ENCODE measurements at regions of chr12 and their contacts with region 1.

Region 1: DNA sequence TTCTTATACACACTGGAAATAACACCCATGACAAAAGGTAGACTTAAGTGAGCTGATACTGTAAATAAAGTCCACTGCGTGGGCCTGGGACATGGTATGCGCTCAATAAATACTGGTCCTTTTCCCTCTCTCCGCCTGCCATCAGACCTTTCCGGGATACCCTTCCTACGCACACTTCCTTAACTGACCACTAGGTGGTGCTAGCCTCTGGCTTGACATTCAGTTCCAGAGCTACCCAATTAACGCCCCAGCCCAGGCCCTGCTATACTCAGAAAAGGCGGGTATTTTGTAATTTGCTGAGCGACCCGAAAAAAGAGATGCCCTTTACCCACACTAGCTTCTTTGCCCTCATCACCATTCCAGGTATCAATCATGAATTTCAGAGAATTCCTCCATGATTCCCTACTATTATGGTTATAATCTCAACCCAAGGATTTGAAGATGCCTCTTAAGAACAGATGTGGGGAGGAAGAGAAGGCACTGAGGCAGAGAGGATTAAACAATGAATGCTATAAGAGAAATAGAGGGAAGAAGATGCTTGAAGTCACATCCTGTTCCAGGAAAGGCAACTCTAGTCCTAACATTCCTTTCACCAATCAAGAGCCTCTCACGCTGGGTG is 3.9 kb upstream of the LRP1 start:
- DNase-seq: peak; percentile 88
- H3K4me3 ChIP-seq: no peak overlapping the region
- H3K27ac ChIP-seq: no peak overlapping the region
- H3K4me1 ChIP-seq: peaks cover 0 to 10% (median 9%) of the 10 kb centered on the region in 4 donors
- H3K27me3 ChIP-seq: no peaks in the 10 kb centered on the region
- CTCF ChIP-seq: peak; percentile 92 to 96 (median 96)
- EP300 ChIP-seq: no peak
- POLR2A ChIP-seq: no peak

Region 2: GRCh38 chr12:57175428-57176138 is 51.2 kb after region 1 on chr12:
- intact Hi-C with region 1: loop called (anchors 2 kb)
- DNase-seq: peak; percentile 95
- H3K4me3 ChIP-seq: no peak overlapping the region
- H3K27ac ChIP-seq: peak overlapping the region; percentile 20 to 64 (median 38)
- H3K4me1 ChIP-seq: peaks cover 0 to 32% (median 16%) of the 10 kb centered on the region in 4 donors
- H3K27me3 ChIP-seq: no peaks in the 10 kb centered on the region
- CTCF ChIP-seq: peak; percentile 82 to 90 (median 85)
- EP300 ChIP-seq: no peak
- POLR2A ChIP-seq: no peak

Region 3: DNA sequence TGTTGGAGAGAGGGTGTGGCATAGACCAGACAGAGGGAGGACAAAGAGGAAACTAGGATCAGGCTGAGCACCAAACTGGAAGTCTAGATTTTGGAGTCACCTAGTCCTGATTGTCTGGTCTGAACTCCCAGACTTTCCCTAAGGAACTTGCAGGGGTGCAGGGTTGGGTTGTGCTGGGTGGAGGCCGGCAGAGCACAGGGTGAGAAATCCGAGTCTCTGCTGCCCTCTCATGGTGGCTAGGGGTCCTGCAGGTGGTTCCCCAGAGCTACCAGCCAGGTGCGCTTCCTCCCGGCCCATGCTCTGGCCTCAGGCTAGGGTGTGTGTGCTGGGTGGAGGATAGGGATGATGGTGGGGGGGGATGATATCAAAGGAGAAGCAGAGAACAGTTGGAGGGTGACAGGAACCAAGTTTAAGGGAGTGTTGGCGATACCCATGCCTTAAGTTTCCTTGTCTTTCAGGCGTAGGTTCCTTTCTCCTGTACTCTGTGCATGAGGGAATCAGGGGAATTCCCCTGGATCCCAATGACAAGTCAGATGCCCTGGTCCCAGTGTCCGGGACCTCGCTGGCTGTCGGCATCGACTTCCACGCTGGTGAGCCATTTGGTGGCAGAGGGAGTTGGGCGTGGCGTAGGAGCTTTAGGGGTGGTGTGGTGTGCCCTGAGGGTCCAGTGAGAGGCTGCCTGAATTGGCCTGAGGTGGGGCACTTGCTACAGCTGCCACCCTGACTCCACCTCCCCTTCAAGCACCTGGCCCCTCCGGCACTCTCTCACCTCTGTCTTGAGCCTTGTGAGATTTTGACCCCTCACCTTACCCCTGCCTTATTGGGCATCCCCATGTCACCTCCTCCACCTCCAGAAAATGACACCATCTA is 58.8 kb after region 1 on chr12:
- intact Hi-C with region 1: loop called (anchors 1 kb)
- DNase-seq: peak; percentile 88
- H3K4me3 ChIP-seq: no peak overlapping the region
- H3K27ac ChIP-seq: no peak overlapping the region
- H3K4me1 ChIP-seq: no peaks in the 10 kb centered on the region
- H3K27me3 ChIP-seq: no peaks in the 10 kb centered on the region
- CTCF ChIP-seq: peak; percentile 83 to 91 (median 86)
- EP300 ChIP-seq: no peak
- POLR2A ChIP-seq: no peak

Measured in sigmoid colon (tissue), 7 donors.